Gastrocnemius medialis (tissue), 4 donors: ENCODE measurements at regions of chr18 and their contacts with region 1.

Region 1: DNA sequence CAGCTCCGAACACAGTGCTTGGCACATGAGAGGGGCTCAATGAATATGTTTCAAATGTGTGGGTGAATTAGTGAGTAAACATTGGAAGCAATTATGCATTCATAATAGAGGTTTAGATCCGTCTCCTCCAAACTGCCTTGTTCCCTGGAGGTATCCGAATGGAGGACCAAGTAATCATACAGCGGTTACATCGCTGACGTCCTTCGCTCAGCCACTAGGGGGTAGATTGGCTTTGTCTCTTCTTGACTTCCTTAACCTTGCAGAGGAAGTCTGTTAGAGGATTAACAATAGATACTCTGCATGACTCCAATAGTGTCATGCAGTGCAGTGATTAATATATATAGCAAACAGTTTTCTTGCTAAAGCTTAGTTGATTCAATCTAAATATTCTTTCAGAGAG is 517.0 kb downstream of the PTPRM start:
- DNase-seq: peak in 1 of 2 donors; percentile 22
- ATAC-seq: peak; percentile 57 to 80
- H3K4me3 ChIP-seq: no peak overlapping the region
- H3K27ac ChIP-seq: no peak overlapping the region
- H3K4me1 ChIP-seq: peaks cover 0 to 5% of the 10 kb centered on the region in 2 donors
- H3K27me3 ChIP-seq: no peaks in the 10 kb centered on the region
- CTCF ChIP-seq: peak in 4 of 5 experiments; percentile 12 to 59 (median 45)
- POLR2A ChIP-seq: no peak

Region 2: GRCh38 chr18:8367217-8367988 is 283.2 kb after region 1 on chr18:
- in situ Hi-C with region 1: no loop called
- intact Hi-C with region 1: loop called (anchors 10 kb)
- DNase-seq: peak; percentile 9 to 35
- ATAC-seq: peak; percentile 66 to 92
- H3K4me3 ChIP-seq: peak overlapping the region; percentile 32 to 64 (median 51)
- H3K27ac ChIP-seq: peak overlapping the region; percentile 28 to 52 (median 44)
- H3K4me1 ChIP-seq: peaks cover 12 to 29% of the 10 kb centered on the region in 2 donors
- H3K27me3 ChIP-seq: no peaks in the 10 kb centered on the region
- CTCF ChIP-seq: peak; percentile 27 to 79 (median 48)
- POLR2A ChIP-seq: no peak